ENCODE measurements at regions of chr9 and their contacts with region 1.

Region 1: GRCh38 chr9:134738869-134739659 is 97.5 kb downstream of the COL5A1 start:
- DNase-seq: peak; percentile 73 to 92
- ATAC-seq: peak; percentile 78
- H3K4me3 ChIP-seq: no peak overlapping the region
- H3K27ac ChIP-seq: no peak overlapping the region
- H3K4me1 ChIP-seq: no peaks in the 10 kb centered on the region
- H3K27me3 ChIP-seq: no peaks in the 10 kb centered on the region

Region 2: DNA sequence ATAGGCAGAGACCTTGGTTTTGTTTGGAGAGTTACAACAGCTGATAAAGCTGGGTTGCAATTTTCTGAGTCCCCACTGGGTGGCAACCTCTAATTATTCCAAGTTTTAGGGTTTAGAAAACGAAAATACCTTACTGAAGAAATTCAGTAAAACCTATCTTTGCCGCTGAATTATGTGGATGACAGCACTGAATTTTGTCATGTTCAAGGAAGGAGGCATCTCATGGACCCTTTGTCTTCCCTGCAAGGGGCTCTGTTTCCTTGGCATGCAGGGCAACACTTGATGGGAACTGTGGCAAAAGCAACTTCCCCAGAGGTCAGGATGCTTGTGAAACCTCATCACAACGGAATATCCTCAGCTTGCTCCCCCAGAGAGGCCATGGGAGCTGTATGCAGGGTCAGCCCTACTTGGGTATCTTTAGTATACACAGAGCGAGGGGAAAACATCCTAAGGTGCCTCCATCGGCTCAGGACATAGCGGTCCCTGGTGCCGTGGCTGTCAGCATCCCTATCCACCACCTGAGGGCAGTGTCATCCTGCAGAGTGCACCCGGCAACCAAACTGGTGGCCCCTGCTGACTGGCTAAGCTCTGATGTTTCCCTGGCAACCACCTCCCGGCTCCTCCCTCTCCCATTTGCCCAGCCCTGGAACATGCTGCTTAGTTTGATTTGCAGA is 289.7 kb before region 1 on chr9:
- intact Hi-C with region 1: loop called (anchors 1 to 2 kb)
- DNase-seq: peak; percentile 95
- ATAC-seq: peak; percentile 96
- H3K4me3 ChIP-seq: no peak overlapping the region
- H3K27ac ChIP-seq: no peak overlapping the region
- H3K4me1 ChIP-seq: no peaks in the 10 kb centered on the region
- H3K27me3 ChIP-seq: no peaks in the 10 kb centered on the region

Region 3: GRCh38 chr9:134686896-134687295 is 52.2 kb before region 1 on chr9:
- intact Hi-C with region 1: no loop called
- DNase-seq: peak in 1 of 2 donors; percentile 34
- ATAC-seq: no peak
- H3K4me3 ChIP-seq: no peak overlapping the region
- H3K27ac ChIP-seq: no peak overlapping the region
- H3K4me1 ChIP-seq: no peaks in the 10 kb centered on the region
- H3K27me3 ChIP-seq: no peaks in the 10 kb centered on the region

Region 4: GRCh38 chr9:134698587-134699342 is 40.3 kb before region 1 on chr9:
- intact Hi-C with region 1: loop called (anchors 2 kb)
- DNase-seq: peak; percentile 76 to 91
- ATAC-seq: peak; percentile 74
- H3K4me3 ChIP-seq: no peak overlapping the region
- H3K27ac ChIP-seq: no peak overlapping the region
- H3K4me1 ChIP-seq: no peaks in the 10 kb centered on the region
- H3K27me3 ChIP-seq: no peaks in the 10 kb centered on the region

Region 5: DNA sequence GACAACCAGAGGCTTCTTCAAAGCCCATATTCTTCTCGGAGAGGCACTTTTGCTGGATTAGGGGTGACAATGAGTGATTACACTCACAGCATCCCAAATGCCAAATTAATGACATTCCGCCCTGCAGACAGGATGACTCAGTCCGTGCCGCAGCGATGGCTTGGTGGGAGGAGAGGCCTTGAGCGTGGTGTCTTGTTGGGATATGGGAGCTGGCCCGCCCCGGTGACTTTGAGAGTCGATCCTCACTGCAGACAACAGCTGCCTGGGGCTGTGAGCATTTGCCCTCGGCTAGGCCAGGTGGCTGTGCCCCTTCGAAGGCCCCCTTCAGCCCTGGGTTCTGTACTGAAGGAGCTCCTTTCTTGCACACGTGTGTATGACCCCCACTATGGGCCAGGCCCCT is 378.2 kb after region 1 on chr9:
- intact Hi-C with region 1: no loop called
- DNase-seq: no peak
- ATAC-seq: no peak
- H3K4me3 ChIP-seq: no peak overlapping the region
- H3K27ac ChIP-seq: no peak overlapping the region
- H3K4me1 ChIP-seq: no peaks in the 10 kb centered on the region
- H3K27me3 ChIP-seq: no peaks in the 10 kb centered on the region